Ascending aorta (tissue), 2 donors: ENCODE measurements at regions of chr5 and their contacts with region 1.

Region 1: GRCh38 chr5:611721-612486 is at the start of gene CEP72:
- DNase-seq: peak; percentile 33 to 91
- H3K4me3 ChIP-seq: peak within 1 kb of the TSS; percentile 87 to 89
- H3K27ac ChIP-seq: no peak within 1 kb of the TSS
- H3K4me1 ChIP-seq: peaks cover 0 to 9% of the 10 kb centered on the region in 2 donors
- H3K27me3 ChIP-seq: no peaks in the 10 kb centered on the region
- CTCF ChIP-seq: no peak
- total RNA-seq, gene CEP72: 0.32 TPM

Region 2: DNA sequence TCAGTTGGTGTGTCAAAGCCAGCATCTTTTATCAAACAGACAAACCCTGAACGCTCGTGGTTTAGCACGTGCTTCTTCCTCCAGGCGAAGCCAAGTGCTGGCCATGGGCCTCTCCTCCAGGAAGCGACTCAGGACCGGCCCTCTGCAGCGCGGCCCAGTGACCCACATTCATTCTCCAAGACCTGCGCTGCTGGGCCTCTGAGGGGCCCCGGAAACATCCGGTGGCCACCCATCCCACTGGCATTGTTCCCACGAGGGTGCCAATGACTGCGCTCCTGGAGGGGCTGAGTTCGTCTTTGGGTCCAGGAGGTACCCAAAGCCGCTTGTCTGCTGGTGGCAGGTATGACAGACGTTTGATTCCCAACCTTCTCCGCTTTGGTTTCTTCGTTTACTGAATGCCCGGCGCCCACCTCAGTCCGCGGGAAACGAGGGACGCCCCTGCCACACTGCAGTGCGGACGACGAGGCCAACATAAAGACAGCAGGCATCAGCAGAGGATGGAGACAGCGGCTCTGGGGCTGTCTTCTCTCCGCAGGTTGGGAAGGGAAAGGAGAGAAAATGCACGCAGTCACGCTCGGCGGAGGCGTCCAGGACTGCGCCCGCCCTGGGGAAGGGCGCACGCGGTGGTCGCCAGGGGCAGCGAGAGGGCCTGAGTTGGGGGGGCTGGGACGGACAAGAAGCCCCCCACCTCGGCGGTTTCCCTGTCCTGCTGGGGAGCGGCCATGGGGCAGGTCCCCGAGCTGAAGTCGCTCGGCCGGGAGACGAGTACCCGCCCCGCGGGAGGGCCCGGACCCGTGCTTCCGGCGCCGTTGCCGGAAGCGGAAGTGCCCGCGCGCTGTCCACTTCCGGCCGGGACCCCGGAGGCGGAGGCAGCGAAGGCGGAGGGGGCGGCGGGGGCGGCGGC is 169.3 kb before region 1 on chr5 and contains the start of gene EXOC3:
- intact Hi-C with region 1: loop called (anchors 10 kb)
- DNase-seq: peak in 1 of 2 donors; percentile 82
- H3K4me3 ChIP-seq: peak within 1 kb of the TSS; percentile 71 to 92
- H3K27ac ChIP-seq: peak within 1 kb of the TSS; percentile 76
- H3K4me1 ChIP-seq: peaks cover 12% of the 10 kb centered on the region in 2 donors
- H3K27me3 ChIP-seq: no peaks in the 10 kb centered on the region
- CTCF ChIP-seq: no peak
- total RNA-seq, gene EXOC3: 56.7 TPM

Region 3: DNA sequence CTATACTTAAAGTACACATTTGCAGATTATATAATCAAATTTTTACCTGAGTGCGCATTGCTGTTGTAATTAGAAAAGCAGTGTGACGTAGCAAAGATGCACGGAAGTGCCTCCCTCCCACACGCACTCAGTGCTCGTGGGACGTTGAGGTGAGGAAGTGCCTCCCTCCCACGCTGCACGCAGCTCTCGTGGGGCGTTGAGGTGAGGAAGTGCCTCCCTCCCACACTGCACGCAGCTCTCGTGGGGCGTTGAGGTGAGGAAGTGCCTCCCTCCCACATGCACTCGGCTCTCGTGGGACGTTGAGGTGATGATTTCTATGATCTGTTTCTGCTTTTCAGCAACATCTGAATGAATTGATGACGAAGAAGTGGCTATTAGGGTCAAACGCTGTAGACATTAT is 148.0 kb before region 1 on chr5:
- intact Hi-C with region 1: no loop called
- DNase-seq: peak; percentile 8 to 58
- H3K4me3 ChIP-seq: no peak overlapping the region
- H3K27ac ChIP-seq: no peak overlapping the region
- H3K4me1 ChIP-seq: no peaks in the 10 kb centered on the region
- H3K27me3 ChIP-seq: no peaks in the 10 kb centered on the region
- CTCF ChIP-seq: no peak

Region 4: GRCh38 chr5:671459-672328 is 59.8 kb after region 1 on chr5:
- intact Hi-C with region 1: loop called (anchors 10 kb)
- DNase-seq: peak in 1 of 2 donors; percentile 78
- H3K4me3 ChIP-seq: peak overlapping the region in 1 of 2 donors; percentile 16
- H3K27ac ChIP-seq: no peak overlapping the region
- H3K4me1 ChIP-seq: peaks cover 14 to 33% of the 10 kb centered on the region in 2 donors
- H3K27me3 ChIP-seq: no peaks in the 10 kb centered on the region
- CTCF ChIP-seq: peak; percentile 73 to 94 (median 89)

Region 5: DNA sequence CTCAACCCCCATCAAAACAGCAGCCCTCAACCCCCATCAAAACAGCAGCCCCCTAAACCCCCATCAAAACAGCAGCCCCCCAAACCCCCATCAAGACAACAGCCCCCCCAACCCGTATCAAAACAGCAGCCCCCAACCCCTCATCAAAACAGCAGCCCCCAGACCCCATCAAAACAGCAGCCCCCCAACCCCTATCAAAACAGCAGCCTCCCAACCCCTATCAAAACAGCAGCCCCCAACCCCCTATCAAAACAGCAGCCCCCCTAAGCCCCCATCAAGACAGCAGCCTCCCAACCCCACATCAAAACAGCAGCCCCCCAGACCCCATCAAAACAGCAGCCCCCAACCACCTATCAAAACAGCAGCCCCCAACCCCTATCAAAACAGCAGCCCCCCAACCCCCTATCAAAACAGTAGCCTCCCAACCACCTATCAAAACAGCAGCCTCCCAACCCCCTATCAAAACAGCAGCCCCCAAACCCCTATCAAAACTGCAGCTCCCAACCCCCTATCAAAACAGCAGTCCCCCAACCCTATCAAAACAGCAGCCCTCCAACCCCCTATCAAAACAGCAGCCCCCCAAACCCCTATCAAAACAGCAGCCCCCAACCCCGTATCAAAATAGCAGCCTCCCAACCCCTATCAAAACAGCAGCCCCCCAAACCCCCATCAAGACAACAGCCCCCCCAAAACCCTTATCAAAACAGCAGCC is 80.1 kb after region 1 on chr5:
- intact Hi-C with region 1: loop called (anchors 2 kb)
- DNase-seq: no peak
- H3K4me3 ChIP-seq: peak overlapping the region; percentile 74 to 90
- H3K27ac ChIP-seq: no peak overlapping the region
- H3K4me1 ChIP-seq: peaks cover 0 to 3% of the 10 kb centered on the region in 2 donors
- H3K27me3 ChIP-seq: no peaks in the 10 kb centered on the region
- CTCF ChIP-seq: no peak

Region 6: GRCh38 chr5:892394-893136 is 280.7 kb after region 1 on chr5 and contains the starts of genes BRD9 and TRIP13:
- intact Hi-C with region 1: loop called (anchors 1 kb)
- DNase-seq: peak in 1 of 2 donors; percentile 84
- H3K4me3 ChIP-seq: peak within 1 kb of the TSS; percentile 88 to 100
- H3K27ac ChIP-seq: peak within 1 kb of the TSS; percentile 82 to 90
- H3K4me1 ChIP-seq: peaks cover 13% of the 10 kb centered on the region in 2 donors
- H3K27me3 ChIP-seq: no peaks in the 10 kb centered on the region
- CTCF ChIP-seq: peak in 1 of 3 experiments; percentile 4
- total RNA-seq, gene BRD9: 13.6 TPM
- total RNA-seq, gene TRIP13: not detected

Region 7: GRCh38 chr5:1799602-1800471 is 1187.9 kb after region 1 on chr5 and contains the start of gene MRPL36:
- intact Hi-C with region 1: loop called (anchors 2 kb)
- DNase-seq: peak; percentile 64 to 93
- H3K4me3 ChIP-seq: peak within 1 kb of the TSS; percentile 80 to 97
- H3K27ac ChIP-seq: peak within 1 kb of the TSS; percentile 63 to 80
- H3K4me1 ChIP-seq: peaks cover 4 to 14% of the 10 kb centered on the region in 2 donors
- H3K27me3 ChIP-seq: no peaks in the 10 kb centered on the region
- CTCF ChIP-seq: no peak
- total RNA-seq, gene MRPL36: 21.4 TPM